H1 (cell line): ENCODE measurements at regions of chr11 and their contacts with region 1.

Region 1: DNA sequence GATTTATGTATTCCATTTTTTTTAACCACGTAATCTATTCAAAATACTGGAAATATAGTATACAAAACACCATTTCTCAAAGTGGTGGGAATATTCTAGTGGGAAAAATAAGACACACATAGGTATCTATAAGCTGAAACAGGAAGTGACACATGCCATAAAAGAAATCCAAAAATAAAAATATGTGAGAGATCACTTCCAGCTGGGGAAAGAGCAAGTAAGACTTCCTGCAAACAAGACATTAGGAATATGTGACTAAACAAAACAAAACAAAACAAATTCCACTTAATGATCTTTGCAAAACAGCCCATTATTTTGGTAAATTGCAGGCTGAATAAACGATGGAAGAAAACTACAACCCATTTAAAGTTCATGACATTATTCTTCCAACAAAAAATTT is 107.3 kb upstream of the CEP126 start:
- DNase-seq: no peak
- H3K4me3 ChIP-seq: no peak overlapping the region
- H3K27ac ChIP-seq: no peak overlapping the region
- H3K4me1 ChIP-seq: no peaks in the 10 kb centered on the region
- H3K27me3 ChIP-seq: no peaks in the 10 kb centered on the region
- CTCF ChIP-seq: no peak
- EP300 ChIP-seq: no peak
- POLR2A ChIP-seq: no peak
- RAD21 ChIP-seq: no peak

Region 2: DNA sequence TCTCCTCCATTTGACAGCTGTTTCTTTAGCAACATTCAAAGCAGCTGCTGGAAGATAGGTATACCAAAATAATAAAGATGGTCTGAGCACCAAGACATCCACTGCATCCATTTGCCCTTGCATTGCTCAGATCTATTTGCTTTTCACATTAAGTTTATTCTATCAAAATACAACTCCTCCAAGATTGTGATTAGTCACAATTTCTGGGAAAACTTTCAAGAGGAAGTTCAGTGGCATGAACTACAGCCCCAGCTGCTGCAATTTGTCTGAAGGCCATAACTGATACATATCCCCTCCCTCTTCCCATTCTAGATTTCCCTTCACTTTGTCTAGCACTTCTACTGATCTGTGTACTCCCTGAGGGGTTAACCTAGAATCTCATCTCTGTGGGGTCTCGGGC is 10.2 kb before region 1 on chr11:
- CTCF ChIA-PET with region 1: interaction called, 15 read pairs
- POLR2A ChIA-PET with region 1: no interaction called
- DNase-seq: no peak
- H3K4me3 ChIP-seq: no peak overlapping the region
- H3K27ac ChIP-seq: no peak overlapping the region
- H3K4me1 ChIP-seq: peaks cover 0 to 5% (median 2%) of the 10 kb centered on the region in 4 experiments; a peak in 3 of 7 replicates
- H3K27me3 ChIP-seq: no peaks in the 10 kb centered on the region
- CTCF ChIP-seq: no peak
- EP300 ChIP-seq: no peak
- POLR2A ChIP-seq: no peak
- RAD21 ChIP-seq: no peak

Region 3: GRCh38 chr11:101825531-101825930 is 18.0 kb after region 1 on chr11:
- CTCF ChIA-PET with region 1: no interaction called
- POLR2A ChIA-PET with region 1: no interaction called
- DNase-seq: no peak
- H3K4me3 ChIP-seq: no peak overlapping the region
- H3K27ac ChIP-seq: no peak overlapping the region
- H3K4me1 ChIP-seq: no peaks in the 10 kb centered on the region
- H3K27me3 ChIP-seq: no peaks in the 10 kb centered on the region
- CTCF ChIP-seq: no peak
- EP300 ChIP-seq: no peak
- POLR2A ChIP-seq: no peak
- RAD21 ChIP-seq: no peak

Region 4: DNA sequence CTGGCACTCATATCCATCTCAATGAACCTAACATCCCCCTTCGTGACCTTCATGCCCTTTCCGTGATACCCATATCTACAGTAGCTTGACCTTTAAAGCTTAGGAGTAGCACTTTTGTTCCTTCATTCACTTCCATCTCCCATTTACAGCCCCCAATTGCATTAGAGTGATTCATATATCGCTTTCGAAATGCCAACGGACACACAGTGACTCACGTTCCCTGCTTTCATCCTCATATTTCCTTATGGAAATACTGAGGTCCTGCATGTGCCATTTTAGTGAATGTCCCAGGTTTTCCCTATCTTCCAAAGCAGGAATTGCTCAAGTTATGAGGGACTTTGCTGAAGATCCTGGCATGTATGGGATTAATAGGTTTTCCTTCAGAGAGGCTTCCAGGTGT is 63.0 kb after region 1 on chr11:
- CTCF ChIA-PET with region 1: no interaction called
- POLR2A ChIA-PET with region 1: no interaction called
- DNase-seq: no peak
- H3K4me3 ChIP-seq: no peak overlapping the region
- H3K27ac ChIP-seq: no peak overlapping the region
- H3K4me1 ChIP-seq: no peaks in the 10 kb centered on the region
- H3K27me3 ChIP-seq: no peaks in the 10 kb centered on the region
- CTCF ChIP-seq: no peak
- EP300 ChIP-seq: no peak
- POLR2A ChIP-seq: no peak
- RAD21 ChIP-seq: no peak